GM12878 (cell line): ENCODE measurements at regions of chr16 and their contacts with region 1.

Region 1: GRCh38 chr16:15073101-15073500 is 17.2 kb upstream of the NTAN1 start:
- DNase-seq: no peak
- ATAC-seq: no peak
- H3K4me3 ChIP-seq: no peak overlapping the region
- H3K27ac ChIP-seq: no peak overlapping the region
- H3K4me1 ChIP-seq: peaks cover 6% of the 10 kb centered on the region; the same call in 1 of the 2 replicates
- H3K27me3 ChIP-seq: no peaks in the 10 kb centered on the region
- CTCF ChIP-seq: no peak
- EP300 ChIP-seq: no peak
- POLR2A ChIP-seq: no peak
- RAD21 ChIP-seq: no peak

Region 2: GRCh38 chr16:13471036-13471435 is 1602.1 kb before region 1 on chr16:
- CTCF ChIA-PET with region 1: no interaction called
- POLR2A ChIA-PET with region 1: no interaction called
- RAD21 ChIA-PET with region 1: no interaction called
- SMC1A ChIA-PET with region 1: no interaction called
- in situ Hi-C with region 1: no loop called
- intact Hi-C with region 1: no loop called
- DNase-seq: no peak
- ATAC-seq: no peak
- H3K4me3 ChIP-seq: no peak overlapping the region
- H3K27ac ChIP-seq: no peak overlapping the region
- H3K4me1 ChIP-seq: no peaks in the 10 kb centered on the region
- H3K27me3 ChIP-seq: no peaks in the 10 kb centered on the region
- CTCF ChIP-seq: no peak
- EP300 ChIP-seq: no peak
- POLR2A ChIP-seq: no peak
- RAD21 ChIP-seq: no peak

Region 3: DNA sequence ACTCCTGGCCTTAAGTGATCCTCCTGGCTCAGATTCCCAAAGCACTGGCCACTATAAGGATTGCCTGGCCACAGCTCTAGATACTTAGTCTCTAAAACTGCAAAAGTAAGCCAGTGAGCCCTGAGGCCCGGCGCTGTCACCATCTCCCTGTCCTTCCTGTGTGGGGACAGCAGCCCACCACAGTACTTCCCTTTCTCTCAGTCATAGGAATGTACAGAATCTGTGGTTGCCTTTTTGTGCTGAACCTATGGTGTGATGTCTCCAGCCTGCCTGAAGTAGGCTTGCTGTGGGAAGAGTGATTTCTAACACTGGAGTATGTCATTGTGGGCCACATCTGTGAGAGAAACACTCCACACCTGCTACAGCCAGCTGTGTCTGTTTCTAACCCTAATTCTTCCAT is 41.9 kb before region 1 on chr16:
- CTCF ChIA-PET with region 1: no interaction called
- POLR2A ChIA-PET with region 1: no interaction called
- RAD21 ChIA-PET with region 1: no interaction called
- SMC1A ChIA-PET with region 1: no interaction called
- in situ Hi-C with region 1: no loop called
- intact Hi-C with region 1: no loop called
- DNase-seq: no peak
- ATAC-seq: no peak
- H3K4me3 ChIP-seq: no peak overlapping the region
- H3K27ac ChIP-seq: no peak overlapping the region
- H3K4me1 ChIP-seq: no peaks in the 10 kb centered on the region
- H3K27me3 ChIP-seq: no peaks in the 10 kb centered on the region
- CTCF ChIP-seq: no peak
- EP300 ChIP-seq: no peak
- POLR2A ChIP-seq: no peak
- RAD21 ChIP-seq: no peak

Region 4: DNA sequence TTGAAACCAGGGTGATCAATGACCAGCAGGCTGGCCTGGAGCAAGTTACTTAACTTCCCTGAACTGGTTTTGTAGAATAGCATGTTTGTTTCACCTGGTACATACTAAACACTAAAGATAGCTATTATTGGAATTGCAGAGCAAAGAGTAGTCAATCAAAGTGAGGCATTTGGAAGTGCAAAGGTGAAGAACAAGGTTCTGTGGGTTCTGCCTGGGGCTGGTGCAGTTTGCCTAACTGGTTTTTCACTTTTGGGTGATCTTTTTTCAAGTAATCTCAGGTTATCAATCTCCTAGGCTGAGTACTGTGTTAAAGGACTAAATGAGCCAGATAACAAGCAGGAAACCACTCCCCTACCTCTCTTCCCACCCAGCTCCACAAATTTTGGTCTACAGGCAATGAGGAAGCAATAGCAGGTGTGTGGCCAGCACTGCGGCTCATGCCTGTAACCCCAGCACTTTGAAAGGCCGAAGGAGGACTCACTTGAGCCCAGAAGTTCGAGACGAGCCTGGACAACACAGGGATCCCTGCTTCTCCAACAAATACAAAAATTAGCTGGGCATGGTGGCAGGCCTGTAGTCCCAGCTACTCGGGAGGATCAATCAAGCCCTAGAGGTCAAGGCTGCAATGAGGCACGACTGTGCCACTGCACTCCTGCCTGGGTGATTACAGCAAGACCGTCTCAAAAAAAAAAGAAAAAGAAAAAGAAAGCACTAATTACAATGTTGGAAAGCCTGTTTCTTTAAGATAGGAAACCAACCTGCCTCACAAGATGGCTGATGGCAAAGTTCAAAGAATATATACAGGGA is 15.3 kb before region 1 on chr16:
- CTCF ChIA-PET with region 1: interaction called, 10 read pairs
- POLR2A ChIA-PET with region 1: no interaction called
- RAD21 ChIA-PET with region 1: no interaction called
- SMC1A ChIA-PET with region 1: interaction called, 5 read pairs
- in situ Hi-C with region 1: no loop called
- intact Hi-C with region 1: no loop called
- DNase-seq: no peak
- ATAC-seq: no peak
- H3K4me3 ChIP-seq: no peak overlapping the region
- H3K27ac ChIP-seq: no peak overlapping the region
- H3K4me1 ChIP-seq: no peaks in the 10 kb centered on the region; the same call in 1 of the 2 replicates
- H3K27me3 ChIP-seq: no peaks in the 10 kb centered on the region
- CTCF ChIP-seq: no peak
- EP300 ChIP-seq: no peak
- POLR2A ChIP-seq: no peak
- RAD21 ChIP-seq: no peak

Region 5: DNA sequence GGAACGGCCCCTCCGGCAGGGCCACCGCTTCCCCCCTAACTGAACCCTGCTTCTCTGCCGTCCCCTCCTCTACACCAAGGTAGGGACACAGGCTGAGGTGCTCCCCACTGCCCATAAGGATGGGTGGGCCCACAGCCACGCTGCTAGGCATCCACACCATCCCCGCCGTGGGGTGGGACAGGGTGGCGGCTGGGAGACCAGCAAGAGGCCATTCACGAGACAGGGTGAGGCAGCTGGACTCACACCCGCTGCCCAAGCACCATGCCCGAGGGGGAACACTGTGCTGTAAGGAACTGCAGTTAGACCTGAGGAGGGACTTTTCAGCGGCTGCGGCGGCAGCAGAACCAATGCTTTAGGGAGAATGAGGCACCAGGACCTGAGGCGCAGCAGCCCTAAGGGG is 68.5 kb after region 1 on chr16:
- CTCF ChIA-PET with region 1: no interaction called
- POLR2A ChIA-PET with region 1: no interaction called
- RAD21 ChIA-PET with region 1: no interaction called
- SMC1A ChIA-PET with region 1: no interaction called
- in situ Hi-C with region 1: no loop called
- intact Hi-C with region 1: no loop called
- DNase-seq: no peak
- ATAC-seq: no peak; the same call in 2 of the 3 replicates
- H3K4me3 ChIP-seq: no peak overlapping the region
- H3K27ac ChIP-seq: no peak overlapping the region
- H3K4me1 ChIP-seq: no peaks in the 10 kb centered on the region
- H3K27me3 ChIP-seq: no peaks in the 10 kb centered on the region
- CTCF ChIP-seq: no peak
- EP300 ChIP-seq: no peak
- POLR2A ChIP-seq: no peak
- RAD21 ChIP-seq: no peak